Right ventricle myocardium superior (tissue), 1 donor: ENCODE measurements at regions of chr9 and their contacts with region 1.

Region 1: GRCh38 chr9:17627641-17628040 is 48.8 kb downstream of the SH3GL2 start:
- DNase-seq: no peak
- ATAC-seq: no peak

Region 2: DNA sequence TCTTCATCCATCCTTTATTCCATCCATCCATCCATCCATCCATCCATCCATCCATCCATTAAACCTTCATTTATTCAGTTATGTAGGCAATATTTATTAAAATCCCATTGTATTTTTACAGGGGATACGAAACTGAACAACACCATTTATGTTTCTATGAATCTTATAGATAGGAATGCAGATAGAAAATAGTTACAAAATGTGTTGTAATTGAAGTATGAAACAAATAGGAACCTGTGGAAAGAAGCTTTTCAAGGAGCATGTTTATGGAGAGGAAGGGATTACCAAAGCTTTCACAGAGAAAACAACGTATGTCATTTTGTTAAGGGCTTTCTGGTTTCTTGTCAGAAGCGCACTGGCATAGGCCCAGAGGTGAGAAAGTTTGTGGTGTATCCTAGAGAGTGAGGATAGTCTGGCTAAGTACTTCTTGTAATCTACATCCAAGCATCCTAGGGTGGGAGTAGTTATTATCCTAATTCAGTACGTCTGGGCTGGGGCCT is 308.8 kb before region 1 on chr9:
- intact Hi-C with region 1: no loop called
- DNase-seq: no peak
- ATAC-seq: no peak

Region 3: DNA sequence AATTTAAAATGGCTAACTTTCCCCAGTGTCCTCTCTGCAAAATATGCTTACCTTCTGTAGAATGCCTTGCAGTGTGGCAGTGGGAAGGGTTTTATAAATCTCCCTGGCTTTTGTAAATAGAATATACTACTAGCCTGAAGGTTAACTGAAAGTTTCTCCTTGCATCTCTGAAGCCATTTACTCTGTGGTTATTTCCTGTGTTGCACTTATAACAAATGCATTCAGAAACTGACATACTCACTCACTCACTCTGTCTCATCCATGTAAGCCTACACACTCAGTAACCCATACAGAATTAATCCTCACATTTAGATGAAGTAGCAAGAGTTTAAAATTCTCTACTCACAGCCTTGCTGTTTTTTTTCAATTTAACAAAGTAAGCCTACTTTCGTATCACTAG is 135.9 kb before region 1 on chr9:
- intact Hi-C with region 1: no loop called
- DNase-seq: no peak
- ATAC-seq: no peak

Region 4: GRCh38 chr9:17571825-17572224 is 55.8 kb before region 1 on chr9:
- intact Hi-C with region 1: loop called (anchors 10 kb)
- DNase-seq: no peak
- ATAC-seq: no peak

Region 5: DNA sequence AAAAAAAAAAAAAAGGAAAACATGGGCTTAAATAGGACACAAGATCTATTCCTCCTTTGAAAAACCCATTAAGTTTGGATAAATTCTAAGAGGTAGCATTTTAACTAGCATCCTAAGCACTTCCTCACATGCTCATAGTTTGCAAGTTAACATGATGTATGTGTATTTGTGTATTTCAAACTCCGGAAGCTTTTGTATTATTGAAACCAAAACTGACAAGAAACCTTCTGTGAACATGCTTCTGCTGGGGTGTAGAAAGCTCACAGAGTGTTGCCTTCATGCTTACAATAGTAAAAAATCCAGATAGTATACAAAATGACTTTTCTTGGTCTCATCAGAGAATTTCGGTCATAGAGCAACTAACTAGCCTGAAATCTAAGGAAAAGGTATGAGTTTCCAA is 55.0 kb after region 1 on chr9:
- intact Hi-C with region 1: no loop called
- DNase-seq: no peak
- ATAC-seq: no peak

Region 6: GRCh38 chr9:17706347-17706746 is 78.7 kb after region 1 on chr9:
- intact Hi-C with region 1: no loop called
- DNase-seq: no peak
- ATAC-seq: no peak